ENCODE measurements at regions of chr6 and their contacts with region 1.

Region 1: GRCh38 chr6:13355043-13355951 is 27.0 kb upstream of the TBC1D7 start:
- DNase-seq: peak; percentile 32 to 55 (median 39)
- H3K4me3 ChIP-seq: peak overlapping the region; percentile 19 to 44
- H3K4me3 Mint-ChIP-seq: peak overlapping the region; percentile 81 to 90 (median 86)
- H3K27ac ChIP-seq: peak overlapping the region; percentile 52
- H3K27ac Mint-ChIP-seq: peak overlapping the region; percentile 82 to 95 (median 91)
- H3K4me1 ChIP-seq: peaks cover 33% of the 10 kb centered on the region
- H3K4me1 Mint-ChIP-seq: peaks cover 34 to 43% (median 35%) of the 10 kb centered on the region in 4 donors
- H3K27me3 ChIP-seq: no peaks in the 10 kb centered on the region
- H3K27me3 Mint-ChIP-seq: no peaks in the 10 kb centered on the region

Region 2: GRCh38 chr6:13336553-13336952 is 18.7 kb before region 1 on chr6:
- CTCF ChIA-PET with region 1: interaction called, 9 read pairs
- POLR2A ChIA-PET with region 1: no interaction called
- intact Hi-C with region 1: loop called (anchors 1 kb)
- DNase-seq: peak; percentile 54 to 70 (median 63)
- H3K4me3 ChIP-seq: no peak overlapping the region
- H3K4me3 Mint-ChIP-seq: no peak overlapping the region
- H3K27ac ChIP-seq: no peak overlapping the region
- H3K27ac Mint-ChIP-seq: peak overlapping the region in 2 of 7 donors; percentile 1 to 13
- H3K4me1 ChIP-seq: no peaks in the 10 kb centered on the region
- H3K4me1 Mint-ChIP-seq: peaks cover 4 to 12% (median 6%) of the 10 kb centered on the region in 4 donors
- H3K27me3 ChIP-seq: no peaks in the 10 kb centered on the region
- H3K27me3 Mint-ChIP-seq: peaks cover 0 to 2% of the 10 kb centered on the region in 2 donors

Region 3: DNA sequence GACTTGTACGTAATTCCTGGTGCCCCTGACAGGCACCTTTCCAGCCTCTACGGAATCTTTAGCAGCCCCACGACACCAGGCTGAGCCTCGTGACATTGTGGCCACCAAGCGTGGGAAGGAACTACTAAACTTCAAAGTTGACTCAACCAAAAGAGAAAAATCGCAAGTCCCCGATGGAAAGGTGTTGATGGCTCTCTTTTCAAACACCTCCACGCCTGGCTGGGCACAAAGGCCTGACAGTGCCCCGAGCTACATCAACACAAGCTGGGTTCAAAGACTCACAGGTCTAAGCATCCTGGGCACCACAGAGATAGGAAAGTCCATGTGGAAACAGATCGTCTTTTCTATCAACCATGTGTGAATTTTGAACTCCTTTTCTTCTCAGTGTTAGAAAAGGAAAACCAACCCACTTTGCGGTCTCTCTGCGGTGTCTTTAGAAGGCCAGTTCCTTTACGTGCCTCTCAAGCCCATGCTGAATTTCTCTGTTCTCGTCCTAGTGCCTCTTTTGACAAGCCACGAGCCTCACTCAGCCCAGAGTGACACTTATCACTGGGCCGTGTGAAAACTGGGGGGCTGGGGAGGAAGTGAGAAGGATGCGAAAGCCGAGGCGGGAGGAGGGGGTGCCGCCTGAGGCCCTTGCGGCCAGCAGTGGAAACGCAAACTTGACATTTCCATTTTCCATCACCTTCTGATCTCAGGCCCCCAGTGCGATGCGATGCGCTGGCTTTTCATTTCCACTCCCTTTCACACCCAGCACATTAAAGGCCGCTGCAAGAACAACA is 72.7 kb after region 1 on chr6:
- CTCF ChIA-PET with region 1: no interaction called
- POLR2A ChIA-PET with region 1: interaction called, 7 read pairs
- intact Hi-C with region 1: loop called (anchors 10 kb)
- DNase-seq: peak; percentile 41 to 70 (median 50)
- H3K4me3 ChIP-seq: peak overlapping the region; percentile 7 to 24
- H3K4me3 Mint-ChIP-seq: peak overlapping the region; percentile 73 to 88 (median 82)
- H3K27ac ChIP-seq: no peak overlapping the region
- H3K27ac Mint-ChIP-seq: peak overlapping the region; percentile 54 to 90 (median 85)
- H3K4me1 ChIP-seq: peaks cover 45% of the 10 kb centered on the region
- H3K4me1 Mint-ChIP-seq: peaks cover 26 to 57% (median 39%) of the 10 kb centered on the region in 4 donors
- H3K27me3 ChIP-seq: no peaks in the 10 kb centered on the region
- H3K27me3 Mint-ChIP-seq: no peaks in the 10 kb centered on the region

Region 4: GRCh38 chr6:13487122-13488014 is 132.1 kb after region 1 on chr6 and contains the start of gene GFOD1:
- CTCF ChIA-PET with region 1: no interaction called
- POLR2A ChIA-PET with region 1: no interaction called
- intact Hi-C with region 1: loop called (anchors 5 kb)
- DNase-seq: peak; percentile 55 to 68 (median 61)
- H3K4me3 ChIP-seq: peak within 1 kb of the TSS; percentile 67 to 69
- H3K4me3 Mint-ChIP-seq: peak within 1 kb of the TSS; percentile 88 to 94 (median 92)
- H3K27ac ChIP-seq: peak within 1 kb of the TSS; percentile 4
- H3K27ac Mint-ChIP-seq: peak within 1 kb of the TSS; percentile 42 to 78 (median 73)
- H3K4me1 ChIP-seq: peaks cover 12% of the 10 kb centered on the region
- H3K4me1 Mint-ChIP-seq: peaks cover 16 to 36% (median 30%) of the 10 kb centered on the region in 4 donors
- H3K27me3 ChIP-seq: no peaks in the 10 kb centered on the region
- H3K27me3 Mint-ChIP-seq: peaks cover 5 to 6% of the 10 kb centered on the region in 2 donors
- total RNA-seq, gene GFOD1: 0.97 to 1.1 TPM

Region 5: DNA sequence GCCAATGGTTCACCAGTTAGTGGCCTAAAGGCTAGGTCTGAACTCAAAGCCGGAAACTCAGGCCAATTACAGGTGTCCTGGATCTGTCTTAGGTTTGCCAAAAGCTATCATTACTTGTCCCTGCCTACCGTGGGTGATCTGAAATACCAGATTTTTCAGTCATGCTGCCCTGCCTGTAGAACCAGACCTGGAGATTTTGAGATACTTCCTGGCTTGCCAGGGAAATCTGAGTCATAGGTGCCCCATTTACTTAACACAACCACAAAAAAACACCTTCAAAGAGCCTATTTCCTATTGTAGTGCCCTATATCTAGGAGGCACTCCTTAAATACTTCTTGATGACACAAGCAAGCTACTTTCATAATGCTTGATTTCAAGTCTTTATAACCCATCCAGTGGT is 370.3 kb after region 1 on chr6:
- CTCF ChIA-PET with region 1: no interaction called
- POLR2A ChIA-PET with region 1: no interaction called
- intact Hi-C with region 1: no loop called
- DNase-seq: peak; percentile 54 to 79 (median 75)
- H3K4me3 ChIP-seq: peak overlapping the region in 1 of 2 donors; percentile 0
- H3K4me3 Mint-ChIP-seq: peak overlapping the region; percentile 68 to 89 (median 82)
- H3K27ac ChIP-seq: peak overlapping the region; percentile 46
- H3K27ac Mint-ChIP-seq: peak overlapping the region; percentile 86 to 99 (median 96)
- H3K4me1 ChIP-seq: peaks cover 42% of the 10 kb centered on the region
- H3K4me1 Mint-ChIP-seq: peaks cover 25 to 41% (median 30%) of the 10 kb centered on the region in 4 donors
- H3K27me3 ChIP-seq: no peaks in the 10 kb centered on the region
- H3K27me3 Mint-ChIP-seq: no peaks in the 10 kb centered on the region